Activated naive CD4-positive, alpha-beta T cell treated with anti-CD3 and anti-CD28 coated beads, Interleukin-2, amount 10 ng/mL, durations not matched to agents 7 days and 5 days (primary cell): ENCODE measurements at regions of chr2 and their contacts with region 1.

Region 1: GRCh38 chr2:10448208-10448645 is at the start of gene ODC1:
- DNase-seq: peak; percentile 97
- H3K4me3 Mint-ChIP-seq: peak within 1 kb of the TSS; percentile 87
- H3K27ac Mint-ChIP-seq: peak within 1 kb of the TSS; percentile 94
- H3K4me1 Mint-ChIP-seq: peaks cover 44% of the 10 kb centered on the region
- H3K27me3 Mint-ChIP-seq: no peaks in the 10 kb centered on the region

Region 2: DNA sequence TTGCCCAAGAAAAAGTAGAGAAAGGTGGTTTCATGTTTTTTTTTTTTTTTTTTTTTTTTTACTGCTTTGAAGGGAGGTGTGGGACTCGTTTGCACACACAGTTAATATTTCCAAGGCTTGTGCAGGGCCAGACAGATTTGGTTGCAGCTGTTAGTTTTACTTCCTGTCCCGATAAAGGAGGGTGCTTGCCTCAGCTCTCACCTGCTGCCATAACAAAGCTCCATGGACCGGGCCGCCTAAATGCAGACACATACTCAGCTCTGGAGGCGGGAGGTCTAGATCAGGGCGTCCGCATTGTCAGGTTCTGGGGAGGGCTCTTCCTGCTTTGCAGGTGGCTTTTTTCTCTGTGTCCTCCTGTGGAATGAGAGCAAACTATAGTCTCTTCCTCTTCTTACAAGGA is 70.0 kb before region 1 on chr2:
- CTCF ChIA-PET with region 1: no interaction called
- DNase-seq: peak; percentile 60
- H3K4me3 Mint-ChIP-seq: no peak overlapping the region
- H3K27ac Mint-ChIP-seq: peak overlapping the region; percentile 47
- H3K4me1 Mint-ChIP-seq: peaks cover 87% of the 10 kb centered on the region
- H3K27me3 Mint-ChIP-seq: no peaks in the 10 kb centered on the region

Region 3: DNA sequence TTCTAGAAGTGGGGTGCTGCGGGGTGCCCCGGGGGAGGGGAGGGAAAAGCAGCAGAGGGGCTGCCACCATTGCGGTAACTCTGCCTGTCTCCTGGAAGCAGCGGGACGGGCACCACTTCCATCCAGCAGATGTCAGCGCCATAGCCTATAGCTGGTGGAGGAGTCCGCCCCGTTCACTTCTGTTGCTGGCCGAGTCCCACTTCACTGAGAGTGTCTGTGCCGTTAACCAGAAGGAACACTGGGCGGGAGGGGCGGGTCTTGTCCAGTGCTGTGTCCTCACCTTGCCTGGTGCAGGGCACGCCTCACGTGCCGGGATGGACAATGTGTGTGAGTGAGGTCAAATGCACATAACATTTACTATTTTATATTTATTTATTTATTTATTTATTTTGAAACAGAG is 19.2 kb after region 1 on chr2:
- CTCF ChIA-PET with region 1: no interaction called
- DNase-seq: no peak
- H3K4me3 Mint-ChIP-seq: no peak overlapping the region
- H3K27ac Mint-ChIP-seq: no peak overlapping the region
- H3K4me1 Mint-ChIP-seq: no peaks in the 10 kb centered on the region
- H3K27me3 Mint-ChIP-seq: peaks cover 31% of the 10 kb centered on the region

Region 4: GRCh38 chr2:10659898-10660568 is 211.8 kb after region 1 on chr2:
- CTCF ChIA-PET with region 1: interaction called, 16 read pairs
- DNase-seq: peak; percentile 63
- H3K4me3 Mint-ChIP-seq: no peak overlapping the region
- H3K27ac Mint-ChIP-seq: no peak overlapping the region
- H3K4me1 Mint-ChIP-seq: peaks cover 13% of the 10 kb centered on the region
- H3K27me3 Mint-ChIP-seq: no peaks in the 10 kb centered on the region